Activated CD4-positive, alpha-beta T cell treated with anti-CD3 and anti-CD28 coated beads, Interleukin-2, amount 10 ng/mL, durations not matched to agents 24 days and 14 days (primary cell): ENCODE measurements at regions of chr2 and their contacts with region 1.

Region 1: DNA sequence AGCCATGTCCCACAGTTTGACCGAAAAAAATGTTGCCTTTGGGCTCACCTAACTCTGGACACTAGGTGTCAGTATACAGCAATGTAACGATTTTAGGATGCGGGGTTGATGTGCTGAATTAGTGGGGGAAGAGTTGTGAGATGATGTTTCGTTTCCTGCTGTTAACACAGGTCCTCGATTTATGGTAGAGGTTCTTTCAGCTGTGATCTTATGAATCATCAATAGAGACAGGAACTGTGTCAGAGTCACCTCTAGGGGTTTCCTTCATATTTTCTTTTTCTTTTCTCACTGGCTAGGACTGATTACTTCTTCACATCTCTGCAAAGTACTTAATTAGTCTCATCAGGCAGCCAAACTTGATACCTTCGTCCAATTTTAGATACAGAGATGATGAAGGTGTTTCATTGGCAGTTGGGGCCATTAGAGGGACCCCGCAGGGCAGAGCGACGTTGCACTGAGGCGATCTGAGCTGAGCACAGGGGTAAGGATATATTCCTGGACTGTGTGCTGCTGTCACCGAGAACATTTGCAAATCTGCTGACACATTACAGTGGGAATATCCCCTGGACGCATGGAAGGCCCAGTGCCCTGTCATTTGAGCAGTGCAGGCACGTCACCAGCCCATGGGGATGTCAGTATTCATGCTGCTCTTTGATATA is 10.2 kb upstream of the MMADHC start:
- DNase-seq: peak; percentile 88
- H3K4me3 Mint-ChIP-seq: peak overlapping the region; percentile 10
- H3K27ac Mint-ChIP-seq: no peak overlapping the region
- H3K4me1 Mint-ChIP-seq: peaks cover 22% of the 10 kb centered on the region
- H3K27me3 Mint-ChIP-seq: peaks cover 21% of the 10 kb centered on the region

Region 2: DNA sequence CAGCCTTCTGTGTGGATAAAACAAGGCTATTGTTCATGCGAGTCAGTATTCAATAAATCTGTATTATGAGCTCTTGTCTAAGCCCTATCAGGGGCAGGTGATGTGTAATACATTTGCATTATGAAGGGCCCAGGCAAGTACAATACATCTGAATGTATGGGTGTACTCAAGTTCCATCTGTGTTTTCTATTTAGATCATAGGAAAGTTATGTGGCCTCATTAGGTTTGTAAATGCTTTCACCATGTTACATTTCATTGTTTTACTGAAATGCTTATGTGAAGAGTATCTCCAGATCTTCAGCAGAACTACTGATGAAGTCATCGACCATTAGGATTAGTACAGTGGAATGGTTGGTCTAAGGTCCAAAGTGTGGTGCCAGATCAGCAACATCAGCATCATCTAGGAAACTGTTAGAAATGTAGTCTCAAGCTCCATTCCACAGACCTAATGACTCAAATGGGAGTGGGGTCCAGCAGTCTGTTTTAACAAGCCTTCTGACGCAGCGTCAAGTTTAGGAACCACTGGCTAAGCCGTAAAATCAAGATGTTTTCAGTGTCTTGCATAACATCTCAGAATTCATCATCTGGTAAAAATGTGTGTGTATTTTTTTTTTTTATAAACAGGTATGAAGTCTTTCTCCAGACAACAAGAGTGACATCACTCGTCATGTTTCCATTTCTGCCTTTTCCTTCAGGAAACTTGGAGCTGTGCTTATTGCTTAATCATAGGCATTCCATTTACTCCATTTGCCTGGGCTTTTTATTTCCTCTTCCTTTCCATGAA is 186.9 kb before region 1 on chr2:
- intact Hi-C with region 1: no loop called
- DNase-seq: no peak
- H3K4me3 Mint-ChIP-seq: no peak overlapping the region
- H3K27ac Mint-ChIP-seq: no peak overlapping the region
- H3K4me1 Mint-ChIP-seq: no peaks in the 10 kb centered on the region
- H3K27me3 Mint-ChIP-seq: no peaks in the 10 kb centered on the region

Region 3: DNA sequence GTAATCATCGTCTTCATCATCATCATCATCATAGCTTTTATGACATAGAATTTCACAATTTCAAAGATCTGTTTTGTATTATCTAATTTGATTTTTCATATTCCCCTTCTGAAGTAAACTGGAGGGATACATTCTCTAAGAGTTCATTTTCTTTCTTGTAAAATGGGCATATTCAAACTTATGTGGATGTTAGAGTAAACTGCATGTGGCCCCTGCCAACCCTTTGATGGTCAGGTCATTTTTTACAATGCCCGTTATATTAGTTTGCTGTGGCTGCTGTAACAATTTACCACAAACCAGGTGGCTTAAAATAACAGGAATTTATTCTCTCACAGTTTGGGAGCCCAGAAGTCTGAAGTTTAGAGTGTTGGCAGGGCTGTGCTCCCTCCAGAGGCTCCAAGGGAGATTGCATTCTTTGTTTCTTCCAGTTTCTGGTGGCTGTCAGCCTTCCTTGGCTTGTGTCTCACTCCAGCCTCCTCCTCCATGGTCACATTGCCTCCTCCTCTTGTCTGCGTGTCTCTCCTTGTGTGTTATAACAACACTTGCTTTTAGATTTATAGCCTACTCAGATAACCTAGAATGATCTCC is 117.3 kb after region 1 on chr2:
- intact Hi-C with region 1: loop called (anchors 10 kb)
- DNase-seq: no peak
- H3K4me3 Mint-ChIP-seq: no peak overlapping the region
- H3K27ac Mint-ChIP-seq: no peak overlapping the region
- H3K4me1 Mint-ChIP-seq: no peaks in the 10 kb centered on the region
- H3K27me3 Mint-ChIP-seq: no peaks in the 10 kb centered on the region

Region 4: DNA sequence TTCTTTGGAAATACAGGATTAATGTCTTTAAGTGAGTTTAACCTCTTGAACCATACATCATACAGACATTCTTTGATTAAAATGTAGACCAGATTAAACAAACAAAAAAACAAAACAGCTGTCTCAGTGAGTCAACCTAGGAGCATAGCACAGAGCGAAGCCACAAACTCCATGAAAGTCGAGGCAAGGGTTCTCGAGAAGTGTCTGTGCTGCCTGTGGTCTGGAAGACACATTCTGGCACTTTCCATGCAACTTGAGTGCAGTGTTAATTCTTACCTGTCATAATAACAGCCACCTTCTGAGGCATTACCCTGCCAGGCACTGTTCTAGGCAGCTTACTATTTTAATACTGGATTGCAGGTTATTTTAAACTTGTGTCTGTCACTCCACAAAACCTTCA is 425.2 kb after region 1 on chr2:
- intact Hi-C with region 1: loop called (anchors 2 kb)
- DNase-seq: peak; percentile 80
- H3K4me3 Mint-ChIP-seq: no peak overlapping the region
- H3K27ac Mint-ChIP-seq: no peak overlapping the region
- H3K4me1 Mint-ChIP-seq: no peaks in the 10 kb centered on the region
- H3K27me3 Mint-ChIP-seq: no peaks in the 10 kb centered on the region

Region 5: GRCh38 chr2:150487537-150488429 is 890.0 kb after region 1 on chr2 and contains the start of gene RND3:
- intact Hi-C with region 1: loop called (anchors 1 kb)
- DNase-seq: peak; percentile 85
- H3K4me3 Mint-ChIP-seq: peak within 1 kb of the TSS; percentile 63
- H3K27ac Mint-ChIP-seq: no peak within 1 kb of the TSS
- H3K4me1 Mint-ChIP-seq: peaks cover 11% of the 10 kb centered on the region
- H3K27me3 Mint-ChIP-seq: peaks cover 52% of the 10 kb centered on the region
- total RNA-seq, gene RND3: not detected in 2 replicates

Region 6: DNA sequence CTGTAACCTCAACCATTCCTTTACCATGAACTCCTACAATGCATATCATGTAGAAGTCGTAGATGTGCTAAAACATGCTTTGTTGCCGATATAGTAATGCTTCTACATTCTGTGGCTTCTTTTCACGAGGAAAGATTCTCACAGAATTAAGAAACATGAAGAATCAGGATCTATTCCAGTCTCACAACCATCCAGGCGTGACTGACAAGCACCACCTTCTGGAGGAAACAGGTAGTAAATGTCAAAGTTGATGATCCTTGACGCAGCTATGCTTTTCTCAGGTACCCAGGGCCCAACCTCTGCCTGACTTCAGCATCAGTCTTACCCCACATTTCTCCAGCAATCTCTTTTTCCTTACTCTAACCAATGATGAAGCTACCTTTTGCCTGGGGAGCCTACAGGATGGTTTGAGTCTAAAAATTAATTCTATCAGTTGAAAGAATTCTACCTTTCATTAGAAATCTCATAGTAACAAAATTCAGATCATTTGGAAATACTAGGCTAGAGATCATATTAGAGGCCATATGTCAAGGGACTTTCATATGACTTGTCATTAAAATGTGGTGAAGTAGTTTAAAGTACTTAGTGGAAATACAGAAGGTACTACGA is 1013.0 kb after region 1 on chr2:
- intact Hi-C with region 1: loop called (anchors 10 kb)
- DNase-seq: no peak
- H3K4me3 Mint-ChIP-seq: no peak overlapping the region
- H3K27ac Mint-ChIP-seq: no peak overlapping the region
- H3K4me1 Mint-ChIP-seq: no peaks in the 10 kb centered on the region
- H3K27me3 Mint-ChIP-seq: no peaks in the 10 kb centered on the region

Region 7: GRCh38 chr2:151051574-151052220 is 1453.9 kb after region 1 on chr2:
- intact Hi-C with region 1: loop called (anchors 1 kb)
- DNase-seq: peak; percentile 74
- H3K4me3 Mint-ChIP-seq: no peak overlapping the region
- H3K27ac Mint-ChIP-seq: no peak overlapping the region
- H3K4me1 Mint-ChIP-seq: no peaks in the 10 kb centered on the region
- H3K27me3 Mint-ChIP-seq: peaks cover 5% of the 10 kb centered on the region

Region 8: DNA sequence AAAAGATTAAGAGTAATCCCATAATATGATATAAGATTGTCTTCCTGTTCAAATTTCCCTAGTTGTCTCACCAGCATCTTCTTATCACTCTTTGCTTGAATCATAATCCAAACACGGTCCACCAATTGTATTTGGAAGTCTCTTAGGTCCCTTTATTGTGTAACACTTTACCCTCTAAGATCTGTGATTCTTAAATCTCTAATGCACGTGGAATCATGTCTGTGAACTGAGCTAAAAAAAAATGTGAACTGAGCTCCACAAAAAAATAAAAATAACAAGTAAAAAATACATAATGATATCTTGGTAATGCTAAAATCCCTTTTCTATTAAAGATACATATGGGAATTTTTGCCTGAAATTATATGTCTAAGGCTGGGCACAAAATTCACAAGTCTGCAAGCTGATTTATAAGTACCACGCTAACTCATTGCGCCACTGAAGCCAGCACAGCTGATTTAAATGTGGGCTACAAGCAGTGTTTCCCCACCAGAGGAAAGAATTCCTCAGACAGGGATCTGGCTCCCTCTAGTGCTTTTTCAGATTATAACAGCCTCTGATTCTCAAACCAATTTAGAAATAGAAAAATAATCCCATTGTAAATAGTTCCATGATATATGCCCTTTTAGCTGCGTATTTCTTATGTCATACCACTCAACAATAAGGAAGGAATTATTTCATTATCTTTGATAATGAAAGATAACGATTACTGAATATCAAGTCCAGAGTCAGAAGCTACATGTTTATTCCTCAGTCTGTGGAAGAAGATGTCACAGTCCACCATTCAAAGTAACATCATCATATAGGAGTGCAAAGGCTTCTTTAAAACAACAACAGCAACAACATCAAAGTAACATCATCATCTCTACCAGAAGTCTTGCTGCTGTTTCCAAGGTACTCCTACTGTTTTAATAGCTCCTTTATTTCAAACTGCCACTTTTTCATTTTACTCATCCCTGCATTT is 1641.0 kb after region 1 on chr2:
- intact Hi-C with region 1: loop called (anchors 2 kb)
- DNase-seq: peak; percentile 77
- H3K4me3 Mint-ChIP-seq: no peak overlapping the region
- H3K27ac Mint-ChIP-seq: no peak overlapping the region
- H3K4me1 Mint-ChIP-seq: no peaks in the 10 kb centered on the region
- H3K27me3 Mint-ChIP-seq: peaks cover 13% of the 10 kb centered on the region